Endothelial cell of umbilical vein (primary cell): ENCODE measurements at regions of chr10 and their contacts with region 1.

Region 1: DNA sequence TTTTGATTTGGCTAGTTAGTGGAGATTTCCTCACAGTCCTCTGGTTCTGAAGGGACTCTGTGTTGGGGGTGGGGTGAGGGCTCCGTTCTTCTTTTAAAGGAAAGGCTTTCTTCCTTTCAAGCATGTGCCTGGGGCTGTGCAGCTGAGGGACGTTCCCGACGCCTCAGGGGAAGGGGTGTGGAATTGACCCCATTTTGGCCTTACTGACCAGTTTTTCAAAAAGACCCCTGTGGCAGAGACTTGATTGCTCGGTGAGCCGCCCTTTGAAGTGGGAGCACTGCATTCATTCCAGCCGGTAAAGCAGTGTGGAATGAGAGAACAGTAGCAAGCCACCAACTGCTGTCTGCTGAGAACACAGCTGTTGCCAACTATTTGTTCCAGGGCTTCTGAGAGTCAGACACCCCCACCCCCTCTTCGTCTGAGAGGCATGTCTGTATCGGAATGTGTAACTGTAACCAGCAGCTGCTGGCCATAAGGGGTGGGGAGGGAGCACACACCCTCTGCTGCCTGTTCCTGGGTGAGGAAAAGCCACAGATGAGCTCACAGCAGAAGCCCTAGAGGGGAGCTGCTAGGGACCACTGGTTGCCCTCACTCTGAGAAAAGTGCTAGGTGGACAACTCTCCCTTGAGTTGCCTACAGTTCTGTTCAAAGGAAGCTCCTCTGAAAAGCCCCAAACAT is 33.2 kb downstream of the WBP1L start:
- DNase-seq: peak; percentile 92
- H3K4me3 ChIP-seq: peak overlapping the region; percentile 0 to 76 (median 54)
- H3K27ac ChIP-seq: peak overlapping the region; percentile 98
- H3K4me1 ChIP-seq: peaks cover 67% of the 10 kb centered on the region
- H3K27me3 ChIP-seq: no peaks in the 10 kb centered on the region
- CTCF ChIP-seq: no peak
- POLR2A ChIP-seq: peak; percentile 62

Region 2: GRCh38 chr10:102743588-102744373 is 33.1 kb before region 1 on chr10 and contains the start of gene WBP1L:
- CTCF ChIA-PET with region 1: interaction called, 6 read pairs
- POLR2A ChIA-PET with region 1: no interaction called
- dilution Hi-C with region 1: no loop called
- intact Hi-C with region 1: loop called (anchors 5 kb)
- DNase-seq: peak; percentile 100
- H3K4me3 ChIP-seq: peak within 1 kb of the TSS; percentile 43 to 91 (median 52)
- H3K27ac ChIP-seq: peak within 1 kb of the TSS; percentile 35
- H3K4me1 ChIP-seq: peaks cover 15% of the 10 kb centered on the region
- H3K27me3 ChIP-seq: no peaks in the 10 kb centered on the region
- CTCF ChIP-seq: no peak
- POLR2A ChIP-seq: peak; percentile 45
- total RNA-seq, gene WBP1L: 43.6 and 46.0 TPM in 2 replicates

Region 3: DNA sequence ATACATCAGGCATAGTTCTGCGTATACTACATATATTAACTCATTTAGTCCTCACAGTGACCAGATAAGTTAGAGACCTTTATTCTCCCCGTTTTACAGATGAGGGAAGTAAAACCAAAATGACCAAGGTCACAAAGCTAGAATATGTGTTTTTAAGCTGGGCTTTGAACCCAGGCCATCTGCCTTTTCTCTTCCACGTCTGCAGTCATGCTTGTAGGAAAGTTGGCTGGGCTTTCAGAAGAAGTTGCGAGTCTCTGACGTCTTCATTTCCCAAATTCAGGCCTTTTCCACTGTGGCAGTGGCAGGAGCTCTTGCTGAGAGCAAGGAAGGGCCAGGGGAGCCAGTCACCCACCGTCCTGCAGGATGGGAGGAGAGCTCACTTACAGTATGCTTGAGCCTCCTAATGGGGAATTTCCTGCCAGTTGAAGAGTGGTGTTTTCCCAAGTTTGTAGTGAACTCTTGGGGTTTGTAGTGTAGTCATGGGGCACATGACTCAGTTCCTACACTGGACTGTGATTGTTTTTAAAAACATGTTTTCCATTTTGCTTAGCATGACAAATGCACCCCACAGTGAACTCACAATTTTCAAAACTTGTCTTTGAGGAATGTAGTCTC is 26.1 kb after region 1 on chr10:
- CTCF ChIA-PET with region 1: interaction called, 11 read pairs
- POLR2A ChIA-PET with region 1: interaction called, 8 read pairs
- dilution Hi-C with region 1: no loop called
- intact Hi-C with region 1: loop called (anchors 1 kb)
- DNase-seq: peak; percentile 99
- H3K4me3 ChIP-seq: no peak overlapping the region
- H3K27ac ChIP-seq: peak overlapping the region; percentile 95
- H3K4me1 ChIP-seq: peaks cover 46% of the 10 kb centered on the region
- H3K27me3 ChIP-seq: no peaks in the 10 kb centered on the region
- CTCF ChIP-seq: no peak
- POLR2A ChIP-seq: peak; percentile 52

Region 4: DNA sequence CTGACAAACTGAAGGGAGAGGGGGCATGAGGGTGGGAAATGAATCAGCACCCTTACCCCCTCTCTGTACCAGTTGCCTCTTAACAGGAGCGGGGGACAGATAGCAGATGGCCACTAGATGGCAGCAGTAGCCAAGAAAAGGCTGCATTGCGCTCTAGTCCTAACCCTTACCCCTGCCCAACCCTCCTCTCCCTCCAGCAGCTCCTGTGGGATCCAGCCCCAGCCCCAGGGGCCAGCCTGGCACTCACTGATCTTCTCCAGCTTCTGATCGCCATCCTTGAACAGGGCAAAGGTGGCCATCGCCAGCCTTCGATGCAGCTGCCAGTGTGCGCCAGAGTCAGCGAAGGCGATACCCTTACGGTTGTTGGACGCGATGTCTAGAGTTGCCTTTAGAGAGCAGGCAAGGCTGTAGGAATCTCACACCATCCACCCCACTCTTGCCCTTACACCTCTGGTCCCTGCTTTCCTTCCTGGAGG is 58.1 kb after region 1 on chr10:
- CTCF ChIA-PET with region 1: interaction called, 11 read pairs
- POLR2A ChIA-PET with region 1: no interaction called
- dilution Hi-C with region 1: no loop called
- intact Hi-C with region 1: no loop called
- DNase-seq: peak; percentile 80
- H3K4me3 ChIP-seq: no peak overlapping the region
- H3K27ac ChIP-seq: no peak overlapping the region
- H3K4me1 ChIP-seq: no peaks in the 10 kb centered on the region
- H3K27me3 ChIP-seq: peaks cover 0 to 4% of the 10 kb centered on the region in 2 experiments
- CTCF ChIP-seq: peak; percentile 82 to 85
- POLR2A ChIP-seq: no peak

Region 5: GRCh38 chr10:102853944-102854694 is 77.2 kb after region 1 on chr10 and contains the start of gene BORCS7:
- CTCF ChIA-PET with region 1: no interaction called
- POLR2A ChIA-PET with region 1: no interaction called
- dilution Hi-C with region 1: no loop called
- intact Hi-C with region 1: loop called (anchors 2 kb)
- DNase-seq: peak; percentile 94
- H3K4me3 ChIP-seq: peak within 1 kb of the TSS; percentile 52 to 81 (median 60)
- H3K27ac ChIP-seq: peak within 1 kb of the TSS; percentile 86
- H3K4me1 ChIP-seq: peaks cover 3% of the 10 kb centered on the region
- H3K27me3 ChIP-seq: no peaks in the 10 kb centered on the region
- CTCF ChIP-seq: no peak
- POLR2A ChIP-seq: peak; percentile 88
- total RNA-seq, gene BORCS7: 16.2 and 16.9 TPM in 2 replicates